Prostate gland (tissue), 2 donors: ENCODE measurements at regions of chr6 and their contacts with region 1.

Region 1: DNA sequence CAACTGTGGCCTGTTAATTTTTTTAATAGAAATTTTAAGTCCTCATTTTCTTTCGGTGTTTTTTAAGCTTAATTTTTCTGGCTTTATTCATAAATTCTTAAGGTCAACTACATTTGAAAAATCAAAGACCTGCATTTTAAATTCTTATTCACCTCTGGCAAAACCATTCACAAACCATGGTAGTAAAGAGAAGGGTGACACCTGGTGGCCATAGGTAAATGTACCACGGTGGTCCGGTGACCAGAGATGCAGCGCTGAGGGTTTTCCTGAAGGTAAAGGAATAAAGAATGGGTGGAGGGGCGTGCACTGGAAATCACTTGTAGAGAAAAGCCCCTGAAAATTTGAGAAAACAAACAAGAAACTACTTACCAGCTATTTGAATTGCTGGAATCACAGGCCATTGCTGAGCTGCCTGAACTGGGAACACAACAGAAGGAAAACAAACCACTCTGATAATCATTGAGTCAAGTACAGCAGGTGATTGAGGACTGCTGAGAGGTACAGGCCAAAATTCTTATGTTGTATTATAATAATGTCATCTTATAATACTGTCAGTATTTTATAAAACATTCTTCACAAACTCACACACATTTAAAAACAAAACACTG is 10.1 kb downstream of the HFE start:
- DNase-seq: peak; percentile 61
- H3K4me3 ChIP-seq: no peak overlapping the region
- H3K27ac ChIP-seq: no peak overlapping the region
- H3K4me1 ChIP-seq: no peaks in the 10 kb centered on the region
- H3K27me3 ChIP-seq: no peaks in the 10 kb centered on the region
- CTCF ChIP-seq: peak; percentile 56 to 91 (median 83)
- POLR2A ChIP-seq: no peak

Region 2: GRCh38 chr6:25907475-25908014 is 189.8 kb before region 1 on chr6:
- intact Hi-C with region 1: no loop called
- DNase-seq: no peak
- H3K4me3 ChIP-seq: no peak overlapping the region
- H3K27ac ChIP-seq: no peak overlapping the region
- H3K4me1 ChIP-seq: no peaks in the 10 kb centered on the region
- H3K27me3 ChIP-seq: no peaks in the 10 kb centered on the region
- CTCF ChIP-seq: no peak
- POLR2A ChIP-seq: no peak

Region 3: GRCh38 chr6:26065952-26066380 is 31.4 kb before region 1 on chr6:
- intact Hi-C with region 1: loop called (anchors 1 kb)
- DNase-seq: peak; percentile 72
- H3K4me3 ChIP-seq: no peak overlapping the region
- H3K27ac ChIP-seq: no peak overlapping the region
- H3K4me1 ChIP-seq: no peaks in the 10 kb centered on the region
- H3K27me3 ChIP-seq: no peaks in the 10 kb centered on the region
- CTCF ChIP-seq: peak; percentile 55 to 88 (median 78)
- POLR2A ChIP-seq: no peak

Region 4: GRCh38 chr6:26295691-26296555 is 198.6 kb after region 1 on chr6:
- intact Hi-C with region 1: no loop called
- DNase-seq: no peak
- H3K4me3 ChIP-seq: no peak overlapping the region
- H3K27ac ChIP-seq: no peak overlapping the region
- H3K4me1 ChIP-seq: no peaks in the 10 kb centered on the region
- H3K27me3 ChIP-seq: peaks cover 3% of the 10 kb centered on the region
- CTCF ChIP-seq: no peak
- POLR2A ChIP-seq: no peak

Region 5: GRCh38 chr6:26568601-26569432 is 471.4 kb after region 1 on chr6:
- intact Hi-C with region 1: no loop called
- DNase-seq: peak; percentile 93
- H3K4me3 ChIP-seq: peak overlapping the region; percentile 29 to 32
- H3K27ac ChIP-seq: peak overlapping the region; percentile 41 to 49
- H3K4me1 ChIP-seq: no peaks in the 10 kb centered on the region
- H3K27me3 ChIP-seq: no peaks in the 10 kb centered on the region
- CTCF ChIP-seq: no peak
- POLR2A ChIP-seq: no peak